B cell (primary cell): ENCODE measurements at regions of chr4 and their contacts with region 1.

Region 1: DNA sequence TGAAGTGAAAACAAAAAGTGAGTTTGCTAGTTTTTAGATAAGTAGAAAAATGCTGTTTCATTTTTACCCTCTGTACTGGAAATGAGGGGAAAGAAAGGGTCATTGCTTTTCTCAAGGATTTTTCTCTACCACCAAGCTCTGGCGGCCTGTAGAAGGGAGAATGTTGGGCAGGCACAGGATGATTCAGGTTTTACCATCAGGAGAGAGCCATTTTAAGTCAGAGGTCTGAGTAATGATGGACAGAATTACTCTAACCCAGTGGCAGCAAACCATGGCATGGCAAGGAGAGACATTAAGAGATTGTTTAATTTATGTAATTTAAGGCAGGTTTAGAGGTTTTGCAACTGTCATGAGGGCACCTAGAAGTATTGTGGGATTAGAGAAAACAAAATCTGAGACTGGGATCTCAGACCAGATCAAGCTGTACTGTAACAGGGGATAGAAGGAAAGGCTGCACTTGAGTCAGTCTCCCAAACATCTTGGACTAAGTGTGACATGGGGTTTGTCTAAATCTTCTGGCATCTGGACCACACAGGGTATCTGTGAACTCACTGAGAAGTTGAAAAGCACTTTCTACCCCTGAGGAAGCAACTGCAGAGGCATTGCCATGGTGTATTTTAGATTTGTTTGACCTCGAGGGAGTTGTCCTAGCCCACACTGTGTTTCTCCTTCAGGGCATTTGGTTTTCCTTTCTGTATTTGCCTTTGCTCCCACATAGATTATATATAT is 81.6 kb downstream of the BANK1 start:
- DNase-seq: no peak
- ATAC-seq: peak; percentile 36
- H3K4me3 ChIP-seq: no peak overlapping the region
- H3K4me3 Mint-ChIP-seq: peak overlapping the region; percentile 38
- H3K27ac ChIP-seq: peak overlapping the region in 1 of 2 donors; percentile 74
- H3K27ac Mint-ChIP-seq: peak overlapping the region; percentile 84
- H3K4me1 ChIP-seq: peaks cover 32 to 56% of the 10 kb centered on the region in 2 donors
- H3K4me1 Mint-ChIP-seq: peaks cover 71% of the 10 kb centered on the region
- H3K27me3 ChIP-seq: no peaks in the 10 kb centered on the region
- H3K27me3 Mint-ChIP-seq: no peaks in the 10 kb centered on the region
- CTCF ChIP-seq: no peak

Region 2: DNA sequence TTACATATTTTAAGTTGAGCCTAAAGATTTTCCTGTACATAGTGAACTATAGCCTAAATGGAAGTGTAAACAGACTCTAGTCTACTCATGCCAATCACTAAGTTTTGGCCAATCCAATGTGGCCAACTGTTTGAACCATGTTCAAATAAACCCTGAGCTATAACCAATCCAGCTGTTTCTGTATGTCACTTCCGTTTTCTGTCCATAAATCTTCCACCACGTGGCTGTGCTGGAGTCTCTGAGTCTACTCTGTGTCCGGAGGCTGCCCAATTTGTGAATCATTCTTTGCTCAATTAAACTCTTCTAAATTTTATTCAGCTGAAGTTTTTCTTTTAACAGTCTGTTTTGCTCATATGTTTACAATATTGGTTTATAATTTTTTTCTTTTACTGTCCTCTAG is 194.0 kb before region 1 on chr4:
- CTCF ChIA-PET with region 1: no interaction called
- POLR2A ChIA-PET with region 1: interaction called, 12 read pairs
- intact Hi-C with region 1: no loop called
- DNase-seq: no peak
- ATAC-seq: no peak
- H3K4me3 ChIP-seq: no peak overlapping the region
- H3K4me3 Mint-ChIP-seq: no peak overlapping the region
- H3K27ac ChIP-seq: no peak overlapping the region
- H3K27ac Mint-ChIP-seq: no peak overlapping the region
- H3K4me1 ChIP-seq: no peaks in the 10 kb centered on the region
- H3K4me1 Mint-ChIP-seq: no peaks in the 10 kb centered on the region
- H3K27me3 ChIP-seq: no peaks in the 10 kb centered on the region
- H3K27me3 Mint-ChIP-seq: no peaks in the 10 kb centered on the region
- CTCF ChIP-seq: no peak

Region 3: DNA sequence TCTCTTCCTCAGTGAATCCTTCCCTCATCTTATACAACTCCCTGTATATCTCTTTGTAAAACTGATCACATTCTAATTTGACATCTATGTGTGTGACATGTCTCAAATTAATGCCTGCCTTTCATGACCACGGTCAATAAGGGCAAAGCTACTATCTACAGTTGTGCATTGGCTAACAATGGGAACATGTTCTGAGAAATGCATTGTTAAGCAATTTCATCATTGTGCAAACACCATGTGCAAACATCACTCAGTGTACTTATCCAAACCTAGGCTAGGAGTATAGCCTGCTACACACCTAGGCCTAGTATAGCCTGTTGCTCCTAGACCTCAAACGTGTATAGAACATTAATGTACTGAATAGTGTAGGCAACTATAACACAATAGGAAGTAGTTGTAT is 13.4 kb after region 1 on chr4:
- CTCF ChIA-PET with region 1: no interaction called
- POLR2A ChIA-PET with region 1: no interaction called
- intact Hi-C with region 1: loop called (anchors 2 kb)
- DNase-seq: no peak
- ATAC-seq: no peak
- H3K4me3 ChIP-seq: no peak overlapping the region
- H3K4me3 Mint-ChIP-seq: no peak overlapping the region
- H3K27ac ChIP-seq: peak overlapping the region in 1 of 2 donors; percentile 0
- H3K27ac Mint-ChIP-seq: peak overlapping the region; percentile 32
- H3K4me1 ChIP-seq: no peaks in the 10 kb centered on the region
- H3K4me1 Mint-ChIP-seq: peaks cover 21% of the 10 kb centered on the region
- H3K27me3 ChIP-seq: no peaks in the 10 kb centered on the region
- H3K27me3 Mint-ChIP-seq: no peaks in the 10 kb centered on the region
- CTCF ChIP-seq: no peak

Region 4: GRCh38 chr4:101944649-101945048 is 72.5 kb after region 1 on chr4:
- CTCF ChIA-PET with region 1: no interaction called
- POLR2A ChIA-PET with region 1: no interaction called
- intact Hi-C with region 1: no loop called
- DNase-seq: no peak
- ATAC-seq: no peak
- H3K4me3 ChIP-seq: no peak overlapping the region
- H3K4me3 Mint-ChIP-seq: no peak overlapping the region
- H3K27ac ChIP-seq: peak overlapping the region in 1 of 2 donors; percentile 23
- H3K27ac Mint-ChIP-seq: peak overlapping the region; percentile 68
- H3K4me1 ChIP-seq: peaks cover 3 to 14% of the 10 kb centered on the region in 2 donors
- H3K4me1 Mint-ChIP-seq: peaks cover 59% of the 10 kb centered on the region
- H3K27me3 ChIP-seq: no peaks in the 10 kb centered on the region
- H3K27me3 Mint-ChIP-seq: no peaks in the 10 kb centered on the region
- CTCF ChIP-seq: no peak